Mammary epithelial cell (primary cell): ENCODE measurements at regions of chr13 and their contacts with region 1.

Region 1: DNA sequence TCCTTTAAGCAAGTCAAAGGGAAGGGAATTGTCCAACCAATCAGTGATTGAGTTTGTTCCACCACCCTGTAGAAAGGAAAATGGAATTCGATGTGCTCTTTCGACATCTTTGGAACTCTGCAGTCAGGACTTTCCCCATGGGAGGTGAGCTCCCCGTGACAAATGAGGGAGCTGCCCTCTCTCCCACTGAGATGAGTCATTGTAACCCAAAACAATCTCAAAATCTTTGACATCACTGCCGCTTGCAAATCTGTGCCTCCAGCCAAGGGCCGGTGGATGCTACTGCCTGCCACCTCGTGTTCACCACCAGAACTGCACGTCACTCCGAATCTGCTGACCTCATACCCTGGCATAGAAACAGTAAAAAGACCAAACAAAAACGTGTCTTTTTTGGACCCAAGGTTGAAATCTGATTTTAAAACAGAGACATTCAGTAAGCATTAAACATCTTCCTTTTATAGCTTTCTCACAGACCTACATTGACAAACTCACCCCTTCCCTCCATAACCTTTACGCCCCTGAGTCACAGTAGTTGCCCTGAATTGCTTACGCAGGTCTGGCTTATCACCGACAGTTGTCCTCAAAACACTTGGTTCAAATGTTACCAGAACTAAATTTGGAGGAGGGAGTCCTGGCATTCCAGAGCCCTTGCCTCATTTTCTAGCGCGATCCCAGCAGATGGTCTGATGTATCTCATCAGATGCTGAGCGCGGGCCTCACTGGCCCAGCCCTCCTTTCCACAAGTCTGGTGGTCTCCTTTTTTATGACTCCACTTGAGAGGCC is 105.2 kb downstream of the COL4A2 start:
- DNase-seq: peak; percentile 97
- H3K4me3 ChIP-seq: no peak overlapping the region
- H3K27ac ChIP-seq: peak overlapping the region; percentile 35
- H3K4me1 ChIP-seq: peaks cover 40% of the 10 kb centered on the region
- H3K27me3 ChIP-seq: no peaks in the 10 kb centered on the region
- CTCF ChIP-seq: peak; percentile 90 to 92

Region 2: GRCh38 chr13:110225609-110226562 is 186.4 kb before region 1 on chr13:
- CTCF ChIA-PET with region 1: no interaction called
- dilution Hi-C with region 1: no loop called
- in situ Hi-C with region 1: no loop called
- intact Hi-C with region 1: loop called (anchors 1 kb)
- DNase-seq: no peak
- H3K4me3 ChIP-seq: no peak overlapping the region
- H3K27ac ChIP-seq: no peak overlapping the region
- H3K4me1 ChIP-seq: peaks cover 6% of the 10 kb centered on the region
- H3K27me3 ChIP-seq: no peaks in the 10 kb centered on the region
- CTCF ChIP-seq: no peak

Region 3: DNA sequence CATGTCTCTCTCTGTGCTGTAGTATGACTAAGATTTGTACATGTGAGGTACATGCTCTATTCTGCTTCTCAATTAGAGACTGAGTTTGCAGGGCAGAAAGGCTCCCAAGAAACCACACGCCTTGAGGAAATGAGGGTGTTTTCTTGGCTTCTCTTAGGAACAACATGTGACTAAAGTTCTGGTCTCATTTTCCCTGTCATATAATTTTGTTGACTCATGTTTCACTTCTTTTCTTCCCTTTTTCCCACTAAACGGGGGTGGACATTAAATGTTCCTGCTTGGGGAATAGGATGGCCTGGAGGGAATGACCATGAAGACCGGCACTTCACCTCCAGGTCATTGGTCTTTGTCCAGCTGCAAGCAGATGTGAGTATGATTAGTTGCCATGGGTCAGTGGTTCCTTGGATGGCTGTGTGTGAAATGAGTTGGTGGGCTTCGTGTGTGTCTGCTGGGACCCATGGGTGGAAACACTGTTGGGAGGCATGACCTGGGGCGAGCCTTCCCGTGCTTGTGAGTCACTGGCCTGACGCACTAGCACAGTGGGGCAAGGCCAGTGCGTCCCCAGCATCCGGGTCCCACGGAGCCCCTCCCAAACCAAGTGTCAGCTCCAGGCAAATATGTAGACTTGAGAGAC is 161.9 kb before region 1 on chr13:
- CTCF ChIA-PET with region 1: interaction called, 5 read pairs
- dilution Hi-C with region 1: no loop called
- in situ Hi-C with region 1: loop called in 1 of 2 experiments (anchors 10 kb)
- intact Hi-C with region 1: loop called (anchors 1 kb)
- DNase-seq: peak; percentile 55
- H3K4me3 ChIP-seq: no peak overlapping the region
- H3K27ac ChIP-seq: no peak overlapping the region
- H3K4me1 ChIP-seq: peaks cover 14% of the 10 kb centered on the region
- H3K27me3 ChIP-seq: no peaks in the 10 kb centered on the region
- CTCF ChIP-seq: no peak

Region 4: DNA sequence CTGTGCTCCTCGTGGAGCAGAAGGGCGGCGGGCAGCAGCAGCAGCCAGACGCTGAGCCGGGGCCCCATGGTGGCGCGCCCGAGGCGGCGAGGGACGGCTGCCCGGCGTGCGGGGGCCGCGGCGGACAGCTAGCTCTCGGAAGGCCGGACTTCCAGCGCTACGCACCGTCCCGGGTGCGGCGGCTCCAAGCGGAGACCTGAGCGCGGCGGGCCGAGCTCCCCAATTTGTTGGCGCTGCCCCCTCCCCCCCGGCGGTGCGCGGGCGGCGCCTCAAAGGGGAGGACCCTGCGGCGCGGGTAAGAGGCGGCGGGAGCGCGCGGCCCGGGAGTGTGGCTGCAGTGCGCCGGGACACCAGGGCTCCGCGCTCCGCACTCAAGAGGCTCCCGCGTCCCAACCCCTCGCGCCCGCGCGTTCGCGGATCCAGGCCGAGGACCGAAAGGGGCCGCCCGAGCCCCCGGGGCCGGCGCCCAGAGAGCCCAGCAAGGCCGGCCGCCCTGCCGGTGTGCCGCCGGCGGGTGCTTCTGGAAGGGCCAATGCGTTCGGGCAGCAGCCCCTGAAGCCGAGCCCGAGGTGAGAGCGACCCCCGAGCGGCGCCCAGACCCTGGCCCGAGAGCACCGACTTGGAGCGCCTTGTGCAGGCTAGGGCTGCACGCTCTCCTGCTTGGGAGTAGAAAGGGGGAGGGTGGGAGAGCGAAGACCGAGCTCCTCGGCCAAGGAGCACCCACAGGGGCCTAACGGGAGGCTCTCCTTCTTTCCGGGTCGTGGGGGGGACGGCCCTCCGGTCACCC is 105.2 kb before region 1 on chr13 and contains the starts of genes COL4A1 and COL4A2:
- CTCF ChIA-PET with region 1: no interaction called
- dilution Hi-C with region 1: no loop called
- in situ Hi-C with region 1: loop called in 1 of 2 experiments (anchors 10 kb)
- intact Hi-C with region 1: loop called (anchors 2 kb)
- DNase-seq: peak; percentile 75
- H3K4me3 ChIP-seq: peak within 1 kb of the TSS; percentile 66 to 73 (median 68)
- H3K27ac ChIP-seq: peak within 1 kb of the TSS; percentile 53
- H3K4me1 ChIP-seq: peaks cover 55% of the 10 kb centered on the region
- H3K27me3 ChIP-seq: no peaks in the 10 kb centered on the region
- CTCF ChIP-seq: no peak
- total RNA-seq, gene COL4A1: 40.9 to 89.0 TPM
- total RNA-seq, gene COL4A2: 74.9 to 94.2 TPM

Region 5: DNA sequence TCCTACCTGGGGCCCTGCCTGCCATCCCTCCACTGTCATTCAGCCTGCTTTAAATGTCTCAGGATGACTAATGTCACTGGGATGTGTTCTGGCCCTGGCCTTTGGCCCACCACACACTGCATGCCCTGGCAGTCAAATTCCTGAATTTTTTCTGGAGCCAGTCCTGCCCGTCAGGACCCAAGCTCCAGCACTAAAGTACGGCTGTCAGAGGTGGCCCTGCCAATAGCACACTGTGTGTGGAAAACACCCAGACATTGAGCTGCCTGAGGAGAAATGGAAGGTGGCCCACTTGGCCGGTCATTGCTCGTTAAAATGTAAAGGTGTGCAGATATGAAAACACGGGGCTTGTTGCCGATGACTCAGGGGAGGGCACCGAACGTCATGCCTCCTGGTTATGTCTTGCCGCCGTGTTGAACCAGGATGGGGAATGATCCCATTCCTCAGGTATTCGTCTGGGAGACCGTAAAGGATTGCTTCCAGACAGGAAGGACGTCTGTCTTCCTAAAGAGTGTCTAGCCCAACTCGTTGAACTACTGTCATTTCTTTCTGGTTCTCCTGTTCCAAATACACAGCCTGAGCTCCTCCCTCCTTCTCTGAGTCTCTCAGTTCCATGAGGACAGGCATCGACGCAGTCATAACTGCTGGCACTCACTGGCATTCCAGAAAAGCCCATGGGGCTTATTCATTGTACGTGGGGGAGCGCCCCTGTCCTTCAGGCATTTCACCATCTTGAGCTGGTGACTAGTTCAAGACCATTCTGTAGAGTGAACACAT is 64.6 kb before region 1 on chr13:
- CTCF ChIA-PET with region 1: interaction called, 6 read pairs
- dilution Hi-C with region 1: no loop called
- in situ Hi-C with region 1: no loop called
- intact Hi-C with region 1: loop called (anchors 1 kb)
- DNase-seq: peak; percentile 99
- H3K4me3 ChIP-seq: no peak overlapping the region
- H3K27ac ChIP-seq: peak overlapping the region; percentile 74
- H3K4me1 ChIP-seq: peaks cover 62% of the 10 kb centered on the region
- H3K27me3 ChIP-seq: no peaks in the 10 kb centered on the region
- CTCF ChIP-seq: no peak

Region 6: DNA sequence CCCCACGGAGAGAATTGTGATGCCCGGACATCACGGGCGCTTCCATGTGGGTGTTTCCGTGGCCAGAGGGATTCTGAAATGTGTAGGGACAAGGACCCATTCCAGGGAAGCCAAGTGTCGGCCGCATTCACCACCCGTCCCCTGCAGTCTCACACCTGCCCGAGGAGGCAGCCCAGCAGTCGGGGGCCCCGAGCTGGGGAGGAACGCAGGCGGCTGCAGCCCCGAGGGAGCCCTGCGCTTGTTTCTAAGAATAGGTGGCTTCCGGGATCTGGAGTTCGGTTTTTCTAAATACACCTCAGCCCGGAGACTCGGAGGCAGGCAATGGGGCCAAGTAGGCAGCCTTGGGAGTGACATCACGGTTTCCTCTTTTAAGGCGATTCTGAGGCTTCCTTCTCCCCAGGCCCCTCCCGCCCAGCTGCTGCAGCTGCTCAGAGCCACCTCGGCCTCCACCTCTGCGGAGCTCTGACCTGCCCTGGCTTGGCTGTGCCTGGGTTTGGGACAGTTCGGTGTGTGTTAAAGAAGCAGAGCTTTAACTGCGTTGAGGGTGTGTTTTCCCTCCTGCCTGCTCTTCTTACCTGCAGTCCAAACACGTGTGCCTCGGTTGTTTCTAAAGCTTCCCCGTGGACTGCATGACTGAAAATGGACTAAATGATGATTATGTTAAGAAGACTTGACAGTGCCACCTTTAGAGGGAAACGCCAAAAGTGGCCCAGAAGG is 24.8 kb before region 1 on chr13:
- CTCF ChIA-PET with region 1: no interaction called
- dilution Hi-C with region 1: no loop called
- in situ Hi-C with region 1: no loop called
- intact Hi-C with region 1: loop called (anchors 1 kb)
- DNase-seq: peak; percentile 53
- H3K4me3 ChIP-seq: peak overlapping the region in 2 of 3 experiments; percentile 27 to 31
- H3K27ac ChIP-seq: peak overlapping the region; percentile 64
- H3K4me1 ChIP-seq: peaks cover 18% of the 10 kb centered on the region
- H3K27me3 ChIP-seq: no peaks in the 10 kb centered on the region
- CTCF ChIP-seq: no peak

Region 7: GRCh38 chr13:110397436-110398115 is 14.7 kb before region 1 on chr13:
- CTCF ChIA-PET with region 1: no interaction called
- dilution Hi-C with region 1: no loop called
- in situ Hi-C with region 1: no loop called
- intact Hi-C with region 1: no loop called
- DNase-seq: peak; percentile 67
- H3K4me3 ChIP-seq: peak overlapping the region; percentile 2 to 16 (median 7)
- H3K27ac ChIP-seq: peak overlapping the region; percentile 81
- H3K4me1 ChIP-seq: peaks cover 24% of the 10 kb centered on the region
- H3K27me3 ChIP-seq: no peaks in the 10 kb centered on the region
- CTCF ChIP-seq: no peak

Region 8: GRCh38 chr13:110471156-110471832 is 59.0 kb after region 1 on chr13:
- CTCF ChIA-PET with region 1: no interaction called
- dilution Hi-C with region 1: no loop called
- in situ Hi-C with region 1: no loop called
- intact Hi-C with region 1: no loop called
- DNase-seq: no peak
- H3K4me3 ChIP-seq: no peak overlapping the region
- H3K27ac ChIP-seq: no peak overlapping the region
- H3K4me1 ChIP-seq: no peaks in the 10 kb centered on the region
- H3K27me3 ChIP-seq: no peaks in the 10 kb centered on the region
- CTCF ChIP-seq: no peak